Mammary epithelial cell (primary cell): ENCODE measurements at regions of chr19 and their contacts with region 1.

Region 1: DNA sequence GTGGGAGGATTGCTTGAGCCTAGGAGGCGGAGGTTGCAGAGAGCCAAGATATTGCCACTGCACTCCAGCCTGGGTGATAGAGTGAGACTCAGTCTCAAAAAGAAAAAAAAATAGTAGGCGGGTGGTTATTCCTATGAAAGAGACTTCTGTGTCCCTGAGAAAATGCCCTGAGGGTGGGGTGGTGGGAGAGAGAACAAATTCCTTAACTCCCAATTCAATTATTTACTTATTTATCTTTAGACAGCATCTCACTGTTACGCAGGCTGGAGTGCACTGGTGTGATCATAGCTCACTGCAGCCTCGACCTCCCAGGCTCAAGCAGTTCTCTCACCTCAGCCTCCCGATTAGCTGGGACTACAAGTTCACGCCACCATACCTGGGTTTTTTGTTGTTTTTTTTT is 10.4 kb upstream of the EEF2 start:
- DNase-seq: peak; percentile 31
- H3K4me3 ChIP-seq: no peak overlapping the region
- H3K27ac ChIP-seq: no peak overlapping the region
- H3K4me1 ChIP-seq: no peaks in the 10 kb centered on the region
- H3K27me3 ChIP-seq: no peaks in the 10 kb centered on the region
- CTCF ChIP-seq: no peak

Region 2: DNA sequence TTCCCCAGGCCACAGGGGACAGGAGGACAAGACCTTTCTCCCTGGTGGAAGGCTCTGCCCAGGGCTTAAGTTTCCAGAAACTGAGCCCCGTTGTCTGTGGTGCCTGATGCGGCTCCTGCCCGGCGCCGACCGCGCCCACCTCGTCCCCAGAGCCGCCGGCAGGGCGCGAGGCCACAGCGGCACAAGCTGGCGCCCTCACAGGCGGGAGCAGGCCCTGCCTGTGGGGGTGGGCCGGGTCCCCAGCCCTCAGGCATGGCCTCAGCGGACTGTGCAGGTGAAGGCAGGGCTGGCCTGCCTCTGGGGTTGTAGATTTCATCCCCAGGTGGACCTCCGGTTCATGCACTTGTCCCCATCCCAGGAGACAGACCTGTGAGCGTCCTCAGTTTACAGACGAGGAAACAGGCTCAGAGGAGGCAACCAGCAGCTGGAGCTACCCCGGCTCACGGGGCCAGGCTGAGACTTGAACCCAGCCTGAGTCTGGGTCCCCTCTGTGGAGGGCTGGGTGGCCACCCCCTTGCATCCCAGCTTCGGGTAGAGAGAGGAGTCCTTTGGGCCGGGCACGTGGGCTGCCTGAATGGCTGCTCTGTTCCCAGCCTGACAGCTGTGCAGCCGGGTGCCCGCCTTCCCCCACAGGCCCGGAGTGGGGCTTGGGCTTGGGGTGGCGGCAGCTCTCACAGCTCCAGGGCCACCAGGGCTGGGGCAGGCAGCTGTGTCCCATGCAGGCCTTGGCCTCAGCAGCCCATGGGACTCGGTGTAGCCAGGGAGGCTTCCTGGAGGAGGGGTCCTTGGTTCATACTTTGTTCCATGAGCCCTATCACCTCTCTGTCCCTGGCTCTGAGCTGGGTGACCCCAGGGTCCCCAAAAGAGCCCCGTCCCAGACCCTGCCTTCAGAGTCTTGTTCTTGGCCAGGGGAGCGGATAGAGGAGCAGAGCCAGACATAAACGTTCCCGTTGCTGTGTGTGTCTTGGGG is 38.7 kb after region 1 on chr19:
- CTCF ChIA-PET with region 1: no interaction called
- dilution Hi-C with region 1: loop called (anchors 5 kb)
- in situ Hi-C with region 1: no loop called
- intact Hi-C with region 1: no loop called
- DNase-seq: no peak
- H3K4me3 ChIP-seq: no peak overlapping the region
- H3K27ac ChIP-seq: no peak overlapping the region
- H3K4me1 ChIP-seq: no peaks in the 10 kb centered on the region
- H3K27me3 ChIP-seq: no peaks in the 10 kb centered on the region
- CTCF ChIP-seq: no peak